K562 (cell line): ENCODE measurements at regions of chr6 and their contacts with region 1.

Region 1: GRCh38 chr6:132813173-132813856 is 1.1 kb upstream of the RPS12 start:
- DNase-seq: peak; percentile 24 to 58 (median 37)
- ATAC-seq: peak; percentile 12
- H3K4me3 ChIP-seq: peak overlapping the region; percentile 76
- H3K27ac ChIP-seq: peak overlapping the region; percentile 99
- H3K4me1 ChIP-seq: peaks cover 4 to 22% of the 10 kb centered on the region in 2 experiments; a peak in 3 of 5 replicates
- H3K27me3 ChIP-seq: no peaks in the 10 kb centered on the region
- CTCF ChIP-seq: no peak
- EP300 ChIP-seq: no peak
- POLR2A ChIP-seq: no peak
- RAD21 ChIP-seq: no peak

Region 2: DNA sequence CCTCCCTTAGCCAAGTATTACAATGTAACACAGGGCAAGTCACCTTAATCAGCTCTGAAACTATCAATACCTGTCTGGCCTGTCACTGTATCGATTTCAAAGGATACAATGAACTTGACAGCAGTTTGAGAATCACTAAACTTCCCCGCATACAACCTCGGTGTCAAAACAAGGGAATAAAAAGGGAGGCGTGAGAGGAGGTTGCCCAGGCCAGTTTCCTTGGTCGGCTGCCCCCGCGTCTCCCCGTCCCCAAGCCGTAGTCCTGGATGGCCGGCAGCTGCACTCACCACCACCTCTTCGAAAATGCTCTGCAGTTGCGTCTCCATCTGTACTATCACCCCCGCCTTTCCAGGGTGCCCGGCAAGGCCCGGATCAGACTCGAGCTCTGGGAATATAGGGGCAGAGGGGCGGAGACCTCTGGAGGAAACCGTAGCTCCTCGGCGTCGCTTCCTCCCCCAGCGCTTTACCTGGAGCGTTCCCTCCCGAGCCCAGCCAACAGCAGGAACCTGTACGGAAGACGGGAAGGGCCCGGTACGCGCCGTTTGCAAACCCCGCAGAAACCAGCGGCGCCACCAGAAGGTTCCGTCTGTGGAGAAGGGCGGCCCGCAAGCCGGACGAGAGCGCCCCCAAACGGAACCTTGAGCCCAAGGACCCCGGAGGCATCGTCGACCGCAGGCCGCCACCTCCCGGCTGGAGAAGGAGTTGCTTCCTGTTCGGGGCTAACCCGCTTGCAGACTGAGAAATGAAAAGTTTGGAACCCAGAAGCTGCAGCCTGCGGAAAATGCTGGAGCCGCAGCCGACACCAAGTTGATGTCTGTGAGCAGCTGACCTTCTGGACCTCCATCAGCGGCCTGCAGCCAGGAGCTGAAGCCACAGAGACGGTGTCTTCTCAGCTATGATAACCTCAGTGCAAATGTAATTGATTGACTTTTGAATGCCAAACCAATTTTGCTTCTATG is 1185.3 kb before region 1 on chr6 and contains the start of gene MED23:
- CTCF ChIA-PET with region 1: no interaction called
- POLR2A ChIA-PET with region 1: no interaction called
- in situ Hi-C with region 1: loop called (anchors 25 kb)
- intact Hi-C with region 1: no loop called
- DNase-seq: peak; percentile 88 to 96 (median 91)
- ATAC-seq: peak; percentile 96
- H3K4me3 ChIP-seq: peak within 1 kb of the TSS; percentile 73
- H3K27ac ChIP-seq: peak within 1 kb of the TSS; percentile 86
- H3K4me1 ChIP-seq: peaks cover 0 to 13% of the 10 kb centered on the region in 2 experiments; a peak in 3 of 5 replicates
- H3K27me3 ChIP-seq: no peaks in the 10 kb centered on the region
- CTCF ChIP-seq: peak; percentile 99 to 100 (median 100)
- EP300 ChIP-seq: peak; percentile 66
- POLR2A ChIP-seq: peak; percentile 89
- RAD21 ChIP-seq: peak; percentile 77 to 88
- polyA plus RNA-seq, gene MED23: 13.7 to 20.0 TPM

Region 3: DNA sequence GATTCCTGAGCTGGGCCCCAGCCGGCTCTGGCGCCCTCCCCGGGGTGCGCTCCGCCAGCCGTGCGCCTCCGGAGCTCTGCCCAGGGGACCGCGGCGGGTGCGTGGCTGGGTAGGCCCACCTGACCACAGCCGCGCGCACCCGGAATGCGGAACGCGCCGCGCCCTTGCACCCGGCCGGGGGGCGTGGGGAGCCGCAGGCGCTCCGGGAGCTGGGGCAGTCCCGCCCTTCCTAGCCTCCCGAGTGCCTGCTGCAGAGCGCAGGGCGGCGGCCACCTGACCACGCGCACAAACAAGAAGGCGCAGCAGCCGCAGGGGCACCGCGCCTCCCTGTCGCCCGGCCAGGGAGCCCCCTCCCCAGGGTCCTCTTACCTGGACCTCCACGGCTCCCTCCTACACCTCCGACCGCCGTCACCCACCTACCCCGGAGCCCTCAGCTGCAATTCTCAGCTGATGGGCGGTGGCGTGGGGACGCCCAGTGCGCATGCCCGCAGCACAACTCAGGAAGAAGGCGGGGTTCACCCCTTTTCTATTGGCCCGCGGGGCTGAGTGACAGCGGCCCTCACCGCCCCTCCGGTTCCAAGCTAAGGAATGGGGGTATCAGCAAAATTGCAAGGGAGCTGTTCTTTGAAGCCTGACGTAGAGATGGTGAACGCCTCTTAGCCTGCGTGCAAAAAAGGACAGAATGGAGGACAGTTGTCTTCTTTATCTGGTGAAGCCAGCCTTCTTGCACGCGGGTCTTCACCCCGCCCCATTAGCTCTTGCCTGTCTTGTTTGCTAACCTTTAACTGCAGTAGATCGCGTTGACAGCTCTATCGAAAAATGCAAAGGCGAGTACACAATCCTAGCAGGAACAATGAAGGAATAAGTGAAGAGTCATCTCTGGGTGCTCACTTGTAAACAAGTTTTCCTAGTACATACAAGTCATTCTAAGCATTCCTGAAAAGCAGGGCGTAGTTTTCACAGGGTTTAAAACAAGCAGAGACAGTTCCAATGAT is 300.4 kb before region 1 on chr6 and contains the start of gene STX7:
- CTCF ChIA-PET with region 1: no interaction called
- POLR2A ChIA-PET with region 1: interaction called, 12 read pairs
- in situ Hi-C with region 1: no loop called
- intact Hi-C with region 1: loop called (anchors 5 kb)
- DNase-seq: peak; percentile 92 to 96 (median 94)
- ATAC-seq: peak; percentile 96
- H3K4me3 ChIP-seq: peak within 1 kb of the TSS; percentile 77
- H3K27ac ChIP-seq: peak within 1 kb of the TSS; percentile 65
- H3K4me1 ChIP-seq: peaks cover 0 to 14% of the 10 kb centered on the region in 2 experiments; a peak in 2 of 5 replicates
- H3K27me3 ChIP-seq: no peaks in the 10 kb centered on the region
- CTCF ChIP-seq: no peak
- EP300 ChIP-seq: peak; percentile 38; the same call in 1 of the 2 replicates
- POLR2A ChIP-seq: peak; percentile 79
- RAD21 ChIP-seq: no peak
- polyA plus RNA-seq, gene STX7: 13.0 to 14.6 TPM

Region 4: GRCh38 chr6:132687306-132687705 is 126.0 kb before region 1 on chr6:
- CTCF ChIA-PET with region 1: no interaction called
- POLR2A ChIA-PET with region 1: no interaction called
- in situ Hi-C with region 1: no loop called
- intact Hi-C with region 1: no loop called
- DNase-seq: no peak
- ATAC-seq: no peak
- H3K4me3 ChIP-seq: no peak overlapping the region
- H3K27ac ChIP-seq: no peak overlapping the region
- H3K4me1 ChIP-seq: no peaks in the 10 kb centered on the region
- H3K27me3 ChIP-seq: no peaks in the 10 kb centered on the region
- CTCF ChIP-seq: no peak
- EP300 ChIP-seq: no peak
- POLR2A ChIP-seq: no peak
- RAD21 ChIP-seq: no peak

Region 5: GRCh38 chr6:132792510-132792909 is 20.8 kb before region 1 on chr6:
- CTCF ChIA-PET with region 1: no interaction called
- POLR2A ChIA-PET with region 1: interaction called, 67 read pairs
- in situ Hi-C with region 1: no loop called
- intact Hi-C with region 1: no loop called
- DNase-seq: no peak
- ATAC-seq: no peak
- H3K4me3 ChIP-seq: no peak overlapping the region
- H3K27ac ChIP-seq: no peak overlapping the region
- H3K4me1 ChIP-seq: no peaks in the 10 kb centered on the region; a peak in 1 of 5 replicates
- H3K27me3 ChIP-seq: no peaks in the 10 kb centered on the region
- CTCF ChIP-seq: no peak
- EP300 ChIP-seq: no peak
- POLR2A ChIP-seq: no peak
- RAD21 ChIP-seq: no peak

Region 6: GRCh38 chr6:132798869-132799538 is 14.3 kb before region 1 on chr6:
- CTCF ChIA-PET with region 1: interaction called, 3 read pairs
- POLR2A ChIA-PET with region 1: interaction called, 67 read pairs
- in situ Hi-C with region 1: no loop called
- intact Hi-C with region 1: loop called (anchors 1 kb)
- DNase-seq: peak; percentile 71 to 90 (median 74)
- ATAC-seq: no peak; the same call in 1 of the 3 replicates
- H3K4me3 ChIP-seq: no peak overlapping the region; the same call in none of the 2 replicates
- H3K27ac ChIP-seq: no peak overlapping the region
- H3K4me1 ChIP-seq: peaks cover 0 to 2% of the 10 kb centered on the region in 2 experiments; a peak in 2 of 5 replicates
- H3K27me3 ChIP-seq: no peaks in the 10 kb centered on the region
- CTCF ChIP-seq: peak; percentile 71 to 93 (median 85)
- EP300 ChIP-seq: peak; percentile 78
- POLR2A ChIP-seq: no peak
- RAD21 ChIP-seq: no peak; a peak in 1 of 4 replicates

Region 7: DNA sequence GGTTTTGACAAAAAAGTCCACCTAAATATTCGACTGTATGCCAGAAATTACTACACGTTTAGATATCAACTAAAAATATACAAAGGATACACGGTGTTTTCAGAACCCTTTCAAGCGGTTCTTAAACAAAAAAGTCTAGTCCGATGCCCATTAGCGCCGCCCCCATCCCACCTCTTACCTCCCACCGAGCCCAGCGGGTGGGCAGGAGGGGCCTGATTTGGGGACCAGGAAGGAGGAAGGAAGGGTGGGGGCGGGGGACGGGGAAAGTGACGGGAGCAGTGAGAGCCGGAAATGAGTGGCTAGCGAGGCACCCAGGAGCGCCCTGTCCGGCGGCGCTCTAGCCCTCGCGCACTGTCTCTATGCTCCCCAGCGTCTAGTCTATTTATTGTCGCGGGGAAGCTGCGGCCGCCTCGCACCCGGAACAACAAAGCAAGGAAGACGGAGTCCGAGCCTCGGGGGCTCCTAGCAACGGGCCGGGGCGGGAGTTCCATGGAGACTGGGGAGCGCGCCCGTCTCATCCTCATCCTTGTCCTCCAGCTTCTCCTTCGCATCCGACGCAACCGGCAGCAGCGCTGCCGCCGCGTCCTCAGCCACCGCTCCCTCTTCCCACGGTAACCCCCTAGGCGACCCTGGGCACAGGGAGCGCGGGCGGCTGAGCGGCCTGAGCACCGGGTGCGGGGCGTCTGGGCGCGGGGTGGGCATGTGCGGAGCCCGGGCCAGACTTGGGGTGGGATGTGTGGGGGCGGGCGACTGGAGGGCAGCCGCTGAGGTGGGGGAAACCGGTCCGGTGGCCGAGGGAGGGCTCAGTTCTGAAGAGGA is 1139.7 kb after region 1 on chr6 and contains the start of gene TBPL1:
- CTCF ChIA-PET with region 1: no interaction called
- POLR2A ChIA-PET with region 1: interaction called, 5 read pairs
- in situ Hi-C with region 1: no loop called
- intact Hi-C with region 1: loop called (anchors 1 kb)
- DNase-seq: peak; percentile 90 to 99 (median 93)
- ATAC-seq: peak; percentile 78
- H3K4me3 ChIP-seq: peak within 1 kb of the TSS; percentile 92
- H3K27ac ChIP-seq: peak within 1 kb of the TSS; percentile 87
- H3K4me1 ChIP-seq: peaks cover 7 to 11% of the 10 kb centered on the region in 2 experiments; a peak in 2 of 5 replicates
- H3K27me3 ChIP-seq: no peaks in the 10 kb centered on the region
- CTCF ChIP-seq: no peak
- EP300 ChIP-seq: peak; percentile 67
- POLR2A ChIP-seq: peak; percentile 89
- RAD21 ChIP-seq: no peak
- polyA plus RNA-seq, gene TBPL1: 107 to 147 TPM

Region 8: GRCh38 chr6:134063966-134064445 is 1250.7 kb after region 1 on chr6:
- CTCF ChIA-PET with region 1: no interaction called
- POLR2A ChIA-PET with region 1: interaction called, 4 read pairs
- in situ Hi-C with region 1: loop called (anchors 25 kb)
- intact Hi-C with region 1: no loop called
- DNase-seq: peak; percentile 65 to 88 (median 74)
- ATAC-seq: peak; percentile 94
- H3K4me3 ChIP-seq: no peak overlapping the region
- H3K27ac ChIP-seq: peak overlapping the region; percentile 40; the same call in 1 of the 3 replicates
- H3K4me1 ChIP-seq: peaks cover 6 to 18% of the 10 kb centered on the region in 2 experiments; a peak in 3 of 5 replicates
- H3K27me3 ChIP-seq: no peaks in the 10 kb centered on the region
- CTCF ChIP-seq: peak; percentile 90 to 99 (median 99)
- EP300 ChIP-seq: no peak
- POLR2A ChIP-seq: no peak
- RAD21 ChIP-seq: peak; percentile 76 to 89